CD4-positive, alpha-beta memory T cell (primary cell): ENCODE measurements at regions of chr18 and their contacts with region 1.

Region 1: DNA sequence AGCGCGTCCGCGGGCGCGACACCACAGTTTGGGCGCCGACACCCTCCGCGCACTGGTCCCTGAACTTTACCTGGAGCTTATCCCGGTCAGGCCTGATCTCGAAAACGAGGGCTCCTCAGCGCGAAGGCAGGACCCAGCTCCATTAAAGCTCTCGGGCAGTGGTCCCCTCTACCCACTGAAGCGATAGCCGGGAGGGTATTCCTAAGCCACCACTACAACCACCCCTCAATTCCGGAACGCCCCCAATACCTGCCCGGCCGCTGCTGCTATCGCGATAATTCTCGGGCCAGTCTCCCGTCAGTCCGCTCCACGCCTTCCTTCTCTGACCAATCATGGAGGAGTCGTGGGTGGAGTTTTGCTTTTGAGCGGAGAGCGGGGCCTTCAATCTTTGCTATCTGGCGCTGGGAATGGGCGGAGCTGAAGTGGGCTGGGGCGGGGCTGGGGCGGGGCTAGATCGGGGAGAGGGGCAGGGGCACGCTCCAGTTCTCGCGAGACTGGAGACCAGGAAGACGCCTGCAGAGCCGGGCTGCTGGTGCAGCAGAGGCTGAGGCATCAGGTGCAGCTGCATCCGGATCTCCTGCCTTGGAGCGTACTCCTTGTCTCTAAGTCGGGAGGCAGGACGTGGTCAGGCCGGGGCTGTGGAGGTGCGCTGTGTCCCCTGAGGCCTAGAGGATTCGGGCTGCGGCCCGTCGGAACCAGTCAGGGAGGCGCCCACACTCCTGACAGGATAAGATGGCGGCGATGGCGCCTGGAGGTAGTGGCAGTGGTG is at the starts of genes PIGN and RELCH:
- DNase-seq: peak; percentile 95 to 99 (median 97)
- H3K4me3 ChIP-seq: peak within 1 kb of the TSS; percentile 76 to 100
- H3K4me3 Mint-ChIP-seq: peak within 1 kb of the TSS; percentile 94 to 99 (median 99)
- H3K27ac ChIP-seq: peak within 1 kb of the TSS; percentile 79
- H3K27ac Mint-ChIP-seq: peak within 1 kb of the TSS; percentile 95 to 97 (median 96)
- H3K4me1 ChIP-seq: peaks cover 56% of the 10 kb centered on the region
- H3K4me1 Mint-ChIP-seq: peaks cover 41 to 73% (median 57%) of the 10 kb centered on the region in 4 donors
- H3K27me3 ChIP-seq: no peaks in the 10 kb centered on the region
- H3K27me3 Mint-ChIP-seq: no peaks in the 10 kb centered on the region
- total RNA-seq, gene PIGN: 27.7 to 31.0 TPM
- total RNA-seq, gene RELCH: 57.2 to 59.4 TPM

Region 2: GRCh38 chr18:61926532-61926931 is 260.4 kb before region 1 on chr18:
- CTCF ChIA-PET with region 1: no interaction called
- POLR2A ChIA-PET with region 1: no interaction called
- intact Hi-C with region 1: no loop called
- DNase-seq: peak; percentile 18 to 44 (median 41)
- H3K4me3 ChIP-seq: no peak overlapping the region
- H3K4me3 Mint-ChIP-seq: peak overlapping the region in 6 of 8 donors; percentile 12 to 75 (median 50)
- H3K27ac ChIP-seq: no peak overlapping the region
- H3K27ac Mint-ChIP-seq: peak overlapping the region in 3 of 7 donors; percentile 30 to 69 (median 37)
- H3K4me1 ChIP-seq: peaks cover 20% of the 10 kb centered on the region
- H3K4me1 Mint-ChIP-seq: peaks cover 13 to 33% (median 23%) of the 10 kb centered on the region in 4 donors
- H3K27me3 ChIP-seq: no peaks in the 10 kb centered on the region
- H3K27me3 Mint-ChIP-seq: no peaks in the 10 kb centered on the region

Region 3: DNA sequence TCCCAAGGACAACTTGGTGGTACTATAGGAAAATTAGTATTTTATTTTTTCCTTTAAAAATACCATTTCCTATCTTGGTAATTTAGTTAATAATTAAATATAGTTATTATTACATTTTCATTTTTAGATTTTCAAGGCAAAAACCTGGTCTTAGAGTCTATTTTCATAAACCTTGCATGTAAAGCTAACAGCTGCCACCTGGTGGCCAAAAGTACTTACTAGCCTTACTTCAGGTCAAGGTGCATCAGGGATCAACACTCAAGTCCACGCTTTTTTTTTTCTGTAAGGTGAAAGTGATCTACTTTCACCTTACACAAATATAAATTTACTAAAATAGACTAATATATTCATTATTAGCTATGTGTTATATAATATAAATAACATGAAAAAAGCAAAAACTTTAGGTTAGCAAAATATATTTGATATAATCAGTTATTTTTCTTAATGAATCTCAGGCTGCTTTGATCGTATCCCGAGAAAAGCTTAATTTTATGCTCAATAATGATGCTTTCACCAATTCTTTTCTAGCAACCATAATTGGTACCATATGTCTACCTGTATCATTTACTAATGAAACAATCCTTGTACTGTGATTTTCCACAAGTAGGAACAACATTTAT is 62.6 kb after region 1 on chr18:
- CTCF ChIA-PET with region 1: interaction called, 191 read pairs
- POLR2A ChIA-PET with region 1: interaction called, 23 read pairs
- intact Hi-C with region 1: loop called (anchors 1 kb)
- DNase-seq: peak; percentile 50 to 72 (median 58)
- H3K4me3 ChIP-seq: no peak overlapping the region
- H3K4me3 Mint-ChIP-seq: no peak overlapping the region
- H3K27ac ChIP-seq: no peak overlapping the region
- H3K27ac Mint-ChIP-seq: no peak overlapping the region
- H3K4me1 ChIP-seq: no peaks in the 10 kb centered on the region
- H3K4me1 Mint-ChIP-seq: no peaks in the 10 kb centered on the region
- H3K27me3 ChIP-seq: no peaks in the 10 kb centered on the region
- H3K27me3 Mint-ChIP-seq: no peaks in the 10 kb centered on the region

Region 4: GRCh38 chr18:62522504-62523254 is 335.7 kb after region 1 on chr18 and contains the start of gene ZCCHC2:
- CTCF ChIA-PET with region 1: no interaction called
- POLR2A ChIA-PET with region 1: interaction called, 12 read pairs
- intact Hi-C with region 1: loop called (anchors 1 kb)
- DNase-seq: peak; percentile 97 to 100 (median 98)
- H3K4me3 ChIP-seq: peak within 1 kb of the TSS; percentile 38 to 98
- H3K4me3 Mint-ChIP-seq: peak within 1 kb of the TSS; percentile 90 to 99 (median 96)
- H3K27ac ChIP-seq: peak within 1 kb of the TSS; percentile 93
- H3K27ac Mint-ChIP-seq: peak within 1 kb of the TSS; percentile 80 to 96 (median 87)
- H3K4me1 ChIP-seq: peaks cover 34% of the 10 kb centered on the region
- H3K4me1 Mint-ChIP-seq: peaks cover 21 to 45% (median 32%) of the 10 kb centered on the region in 4 donors
- H3K27me3 ChIP-seq: no peaks in the 10 kb centered on the region
- H3K27me3 Mint-ChIP-seq: no peaks in the 10 kb centered on the region
- total RNA-seq, gene ZCCHC2: 51.7 to 52.2 TPM

Region 5: DNA sequence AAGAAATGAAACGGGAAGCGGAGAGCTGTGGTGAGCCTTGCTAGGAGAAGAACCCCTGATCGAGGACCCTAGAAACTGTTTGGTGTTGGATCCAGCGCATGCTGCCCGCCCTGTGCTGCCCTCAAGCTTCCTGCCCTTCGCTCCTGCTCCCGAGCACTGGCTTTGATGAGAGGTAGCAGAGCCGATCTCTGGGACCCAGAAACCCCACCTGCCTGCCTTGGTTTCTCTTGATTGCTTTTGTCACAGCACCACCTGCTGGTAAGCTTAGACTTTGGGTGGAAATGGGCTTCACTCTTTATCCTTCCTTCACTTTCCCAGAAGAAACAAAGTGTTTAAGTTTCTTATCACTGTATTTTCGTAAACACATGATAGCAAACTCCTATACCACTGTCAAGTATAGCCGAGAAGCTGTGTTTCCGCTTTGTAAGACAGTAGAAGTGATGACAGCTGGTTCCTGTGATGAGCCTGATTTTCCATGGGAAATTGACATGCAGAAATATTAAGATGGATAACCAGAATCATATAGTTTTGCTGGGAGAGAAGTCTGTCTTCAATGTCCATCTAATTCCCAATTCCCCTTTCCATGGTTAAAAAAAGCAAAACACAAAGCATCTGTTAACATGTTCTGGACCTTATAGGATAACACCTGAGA is 795.8 kb after region 1 on chr18:
- CTCF ChIA-PET with region 1: no interaction called
- POLR2A ChIA-PET with region 1: no interaction called
- intact Hi-C with region 1: loop called (anchors 5 kb)
- DNase-seq: peak in 4 of 5 donors; percentile 36 to 51 (median 48)
- H3K4me3 ChIP-seq: no peak overlapping the region
- H3K4me3 Mint-ChIP-seq: peak overlapping the region in 5 of 8 donors; percentile 51 to 78 (median 69)
- H3K27ac ChIP-seq: no peak overlapping the region
- H3K27ac Mint-ChIP-seq: peak overlapping the region in 1 of 7 donors; percentile 18
- H3K4me1 ChIP-seq: peaks cover 5% of the 10 kb centered on the region
- H3K4me1 Mint-ChIP-seq: peaks cover 0 to 8% (median 6%) of the 10 kb centered on the region in 4 donors
- H3K27me3 ChIP-seq: no peaks in the 10 kb centered on the region
- H3K27me3 Mint-ChIP-seq: no peaks in the 10 kb centered on the region

Region 6: DNA sequence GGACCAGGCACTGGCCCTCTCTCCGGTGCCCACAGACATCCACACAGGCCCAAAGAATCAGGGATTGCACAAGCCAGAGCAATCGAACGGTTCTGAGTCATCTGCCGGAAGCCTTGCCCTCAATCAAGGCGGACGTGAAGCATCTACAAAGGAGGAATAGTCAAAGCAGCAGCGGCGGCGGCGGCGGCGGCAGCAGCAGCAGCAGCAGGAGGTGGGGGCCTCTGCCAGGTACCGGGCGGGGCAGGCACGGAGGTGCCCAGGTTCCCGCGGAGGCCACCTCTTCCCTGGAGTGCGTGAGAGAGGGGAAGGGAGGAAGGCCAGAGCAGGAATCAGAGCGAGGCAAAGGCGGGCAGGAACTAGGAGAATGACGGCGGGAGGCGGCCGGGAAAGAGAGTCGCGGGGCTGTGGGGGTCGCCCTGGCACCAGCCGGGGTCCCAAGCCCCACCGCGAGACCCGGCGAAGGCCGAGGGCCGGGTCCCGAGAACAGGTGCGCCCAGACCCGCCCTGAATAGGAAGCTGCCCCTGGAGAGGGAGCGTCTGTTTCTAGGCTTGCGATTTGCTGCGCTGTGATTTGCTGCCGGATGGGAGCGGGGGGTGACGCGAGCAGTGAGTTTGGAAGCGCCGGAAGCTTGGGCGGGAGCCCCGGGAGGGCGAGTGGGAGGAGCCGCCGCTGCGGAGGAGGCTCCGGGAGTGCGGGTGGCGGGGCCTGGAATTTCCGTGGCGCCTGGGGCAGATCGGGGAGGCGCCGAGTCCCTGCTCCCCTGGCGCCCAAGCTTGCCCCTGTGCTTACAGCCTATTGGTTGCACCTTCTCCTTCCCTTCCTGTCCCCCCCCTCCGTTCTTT is 1783.2 kb after region 1 on chr18 and contains the start of gene SERPINB8:
- CTCF ChIA-PET with region 1: no interaction called
- POLR2A ChIA-PET with region 1: no interaction called
- intact Hi-C with region 1: loop called (anchors 1 kb)
- DNase-seq: peak; percentile 73 to 89 (median 77)
- H3K4me3 ChIP-seq: peak within 1 kb of the TSS; percentile 64 to 86
- H3K4me3 Mint-ChIP-seq: peak within 1 kb of the TSS; percentile 87 to 99 (median 96)
- H3K27ac ChIP-seq: peak within 1 kb of the TSS; percentile 90
- H3K27ac Mint-ChIP-seq: peak within 1 kb of the TSS; percentile 82 to 98 (median 96)
- H3K4me1 ChIP-seq: peaks cover 16% of the 10 kb centered on the region
- H3K4me1 Mint-ChIP-seq: peaks cover 22 to 37% (median 25%) of the 10 kb centered on the region in 4 donors
- H3K27me3 ChIP-seq: no peaks in the 10 kb centered on the region
- H3K27me3 Mint-ChIP-seq: no peaks in the 10 kb centered on the region
- total RNA-seq, gene SERPINB8: 13.8 to 16.3 TPM